A549 (cell line): ENCODE measurements at regions of chr19 and their contacts with region 1.

Region 1: DNA sequence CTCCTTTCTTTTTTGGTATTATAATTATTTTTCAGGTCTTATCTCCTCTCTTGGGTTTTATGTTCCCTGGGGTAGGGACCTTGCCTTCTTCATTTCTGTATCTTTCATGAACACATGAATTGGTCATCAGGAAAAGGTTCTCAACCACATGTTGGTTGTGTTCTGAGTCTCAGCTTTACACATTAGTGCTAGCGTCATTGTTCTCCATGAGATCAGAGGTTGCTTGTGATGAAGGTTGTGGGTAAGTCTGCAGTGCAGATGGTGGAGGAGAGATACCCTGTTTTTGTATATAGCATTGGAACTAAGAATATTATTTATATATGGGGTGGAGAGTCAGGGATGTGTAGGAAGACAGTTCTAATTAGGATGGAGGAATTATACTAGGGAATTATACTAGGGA is 24.5 kb upstream of the CEACAM8 start:
- DNase-seq: no peak
- ATAC-seq: no peak
- H3K4me3 ChIP-seq: no peak overlapping the region
- H3K27ac ChIP-seq: no peak overlapping the region
- H3K4me1 ChIP-seq: no peaks in the 10 kb centered on the region
- CTCF ChIP-seq: no peak
- EP300 ChIP-seq: no peak
- POLR2A ChIP-seq: no peak
- RAD21 ChIP-seq: no peak

Region 2: DNA sequence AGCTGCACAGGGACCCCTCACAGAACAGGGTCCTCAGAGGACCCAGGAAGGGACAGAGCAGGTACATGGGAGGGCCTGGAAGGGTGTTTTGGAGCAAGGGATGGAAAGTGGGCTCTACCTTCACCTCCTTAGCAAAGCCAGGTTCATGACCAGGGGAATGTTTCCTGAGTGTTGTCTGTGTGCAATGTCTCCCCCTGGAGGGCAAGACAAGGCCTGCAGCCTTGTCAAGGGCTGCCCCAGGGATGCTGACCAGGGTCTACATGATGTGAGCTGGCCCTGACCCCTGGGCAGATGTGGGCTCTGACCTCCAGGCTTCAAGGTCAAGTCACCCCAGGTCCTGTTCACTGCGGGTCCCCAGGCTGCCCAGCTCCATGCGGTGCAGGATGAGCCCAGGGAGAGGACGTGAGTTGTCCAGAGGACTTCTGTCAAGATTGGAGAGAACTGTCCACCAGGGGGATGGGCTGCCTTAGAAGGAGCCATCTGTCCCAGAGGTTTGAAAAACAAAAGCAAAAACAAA is 90.0 kb before region 1 on chr19:
- CTCF ChIA-PET with region 1: no interaction called
- POLR2A ChIA-PET with region 1: no interaction called
- DNase-seq: peak; percentile 79 to 94
- ATAC-seq: peak; percentile 79 to 95
- H3K4me3 ChIP-seq: no peak overlapping the region
- H3K27ac ChIP-seq: peak overlapping the region; percentile 60 to 63; a peak in 5 of 6 replicates
- H3K4me1 ChIP-seq: peaks cover 12% of the 10 kb centered on the region
- CTCF ChIP-seq: peak; percentile 98
- EP300 ChIP-seq: no peak
- POLR2A ChIP-seq: no peak
- RAD21 ChIP-seq: peak; percentile 98

Region 3: DNA sequence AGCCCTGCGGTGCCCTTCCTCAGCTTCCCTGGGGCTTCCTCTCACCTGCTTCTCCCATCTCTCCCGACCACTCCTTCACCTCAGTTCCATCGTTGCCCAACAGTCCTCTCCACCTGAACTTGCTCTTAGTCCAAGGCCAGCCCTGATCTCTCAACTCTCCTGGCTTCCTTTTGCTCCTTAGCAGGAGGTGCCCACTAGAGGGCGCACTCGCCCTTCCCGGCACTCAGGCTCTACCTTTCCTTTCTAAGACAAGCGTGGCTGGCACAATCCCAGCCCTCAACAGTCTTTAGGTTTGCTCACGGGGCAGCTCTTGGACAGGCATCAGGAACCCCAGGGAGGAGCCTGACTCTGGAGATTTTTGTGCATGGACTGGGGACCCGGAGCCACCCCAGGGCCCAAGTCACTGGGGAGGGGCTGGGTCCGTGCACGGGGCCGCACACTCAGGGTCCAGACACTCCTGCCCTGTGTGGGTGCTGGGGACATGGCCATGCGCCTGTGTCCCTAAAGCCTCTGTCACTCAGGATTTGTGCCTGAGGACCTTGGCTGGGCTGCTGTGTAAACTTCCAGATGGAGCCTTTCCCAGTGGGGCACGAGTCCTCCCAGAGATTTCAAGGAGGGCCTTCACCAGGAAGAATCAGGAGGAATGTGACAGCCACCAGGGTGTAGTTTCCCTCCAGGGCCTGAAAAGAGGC is 12.5 kb before region 1 on chr19:
- CTCF ChIA-PET with region 1: interaction called, 26 read pairs
- POLR2A ChIA-PET with region 1: interaction called, 4 read pairs
- DNase-seq: peak; percentile 80 to 88
- ATAC-seq: peak; percentile 75 to 98
- H3K4me3 ChIP-seq: no peak overlapping the region
- H3K27ac ChIP-seq: no peak overlapping the region
- H3K4me1 ChIP-seq: no peaks in the 10 kb centered on the region
- CTCF ChIP-seq: peak; percentile 87
- EP300 ChIP-seq: no peak
- POLR2A ChIP-seq: peak; percentile 22; the same call in 1 of the 2 replicates
- RAD21 ChIP-seq: peak; percentile 75 to 86

Region 4: GRCh38 chr19:42662712-42663111 is 43.4 kb after region 1 on chr19:
- CTCF ChIA-PET with region 1: no interaction called
- POLR2A ChIA-PET with region 1: no interaction called
- DNase-seq: no peak
- ATAC-seq: peak in 1 of 2 experiments; percentile 53; a peak in 3 of 6 replicates
- H3K4me3 ChIP-seq: no peak overlapping the region
- H3K27ac ChIP-seq: no peak overlapping the region
- H3K4me1 ChIP-seq: no peaks in the 10 kb centered on the region
- CTCF ChIP-seq: no peak
- EP300 ChIP-seq: no peak
- POLR2A ChIP-seq: no peak
- RAD21 ChIP-seq: no peak